GM23248 (cell line): ENCODE measurements at regions of chr1 and their contacts with region 1.

Region 1: DNA sequence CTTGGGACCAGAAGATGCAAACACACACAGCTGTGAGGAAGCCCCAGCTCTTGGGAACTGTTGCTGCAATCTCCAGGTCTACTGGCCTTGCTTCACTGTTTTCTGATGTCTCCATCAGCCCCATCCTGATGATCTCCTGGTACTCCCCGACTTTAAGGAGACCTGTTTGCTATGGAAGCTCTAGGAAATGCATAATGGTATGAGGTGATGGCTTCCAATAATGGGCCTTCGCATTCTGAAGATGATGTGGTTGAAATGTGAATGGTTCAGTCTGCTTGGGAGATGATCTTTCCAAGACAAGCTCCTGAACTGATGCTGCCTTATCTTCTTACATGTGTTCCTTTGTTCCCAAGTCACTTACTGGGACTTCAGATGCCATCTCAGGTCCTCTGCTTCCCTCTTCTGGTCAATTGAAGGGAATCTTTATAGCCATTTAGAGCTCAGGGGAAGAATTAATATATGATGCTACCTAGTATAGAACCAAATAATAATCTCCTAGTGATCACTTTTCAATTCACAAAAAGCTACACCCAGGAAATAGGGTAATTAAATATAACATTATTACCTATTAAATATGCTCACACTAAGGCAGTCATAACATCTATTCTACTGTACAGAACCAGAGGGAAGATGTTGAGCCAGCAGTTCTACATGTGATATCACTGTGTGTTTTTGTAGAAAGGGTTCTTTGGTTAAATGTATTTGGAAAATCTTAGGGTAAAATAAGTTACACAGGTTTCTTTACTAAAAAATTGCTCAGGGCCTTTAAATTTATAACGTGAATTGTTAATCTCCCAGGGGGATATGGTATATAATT is 73.9 kb upstream of the VTCN1 start:
- DNase-seq: peak; percentile 71
- H3K4me3 ChIP-seq: no peak overlapping the region
- H3K27ac ChIP-seq: no peak overlapping the region
- H3K4me1 ChIP-seq: no peaks in the 10 kb centered on the region
- H3K27me3 ChIP-seq: peaks cover 11% of the 10 kb centered on the region; the same call in 1 of the 2 replicates

Region 2: GRCh38 chr1:117077267-117077666 is 207.3 kb before region 1 on chr1:
- in situ Hi-C with region 1: loop called (anchors 10 kb)
- DNase-seq: peak; percentile 93
- H3K4me3 ChIP-seq: no peak overlapping the region
- H3K27ac ChIP-seq: peak overlapping the region; percentile 53
- H3K4me1 ChIP-seq: peaks cover 13% of the 10 kb centered on the region
- H3K27me3 ChIP-seq: no peaks in the 10 kb centered on the region